Activated CD8-positive, alpha-beta T cell treated with anti-CD3 and anti-CD28 coated beads for 36 hours (primary cell): ENCODE measurements at regions of chr10 and their contacts with region 1.

Region 1: DNA sequence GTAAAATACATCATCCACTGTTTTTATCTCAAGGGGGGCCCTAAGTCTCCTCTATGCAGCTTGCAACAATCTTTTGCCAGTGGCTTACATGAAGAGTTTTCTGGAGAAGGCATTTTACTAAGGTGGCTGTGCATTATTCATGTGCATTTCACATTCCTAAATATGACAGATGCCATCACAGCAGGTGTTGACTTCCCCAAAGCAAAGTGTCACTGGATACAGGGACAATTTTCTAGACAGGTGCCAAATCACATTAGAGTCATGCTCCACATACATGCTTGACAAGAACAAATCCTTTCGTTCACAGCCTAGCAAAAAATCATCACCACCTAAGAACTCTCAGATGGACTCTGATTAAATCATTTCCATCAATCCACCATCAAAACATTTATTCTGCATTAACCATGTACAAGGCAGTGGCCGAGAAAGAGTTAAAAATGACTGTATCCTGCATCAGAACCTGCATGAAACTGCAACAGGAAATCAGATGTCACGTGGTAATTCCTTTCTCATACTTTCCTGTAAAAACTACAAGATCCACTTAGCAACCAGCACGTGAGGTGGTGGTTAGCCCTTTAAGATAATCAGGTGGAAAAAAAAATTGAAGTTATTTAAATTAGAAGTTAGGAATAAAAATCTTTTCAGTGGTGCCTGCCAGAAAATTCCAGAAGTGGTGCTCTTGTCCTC is 88.2 kb upstream of the AFAP1L2 start:
- DNase-seq: peak; percentile 82
- ATAC-seq: peak; percentile 59
- H3K4me3 Mint-ChIP-seq: peak overlapping the region; percentile 52
- H3K27ac Mint-ChIP-seq: peak overlapping the region; percentile 85
- H3K4me1 Mint-ChIP-seq: peaks cover 85% of the 10 kb centered on the region
- H3K27me3 Mint-ChIP-seq: no peaks in the 10 kb centered on the region
- CTCF ChIP-seq: no peak

Region 2: GRCh38 chr10:114541081-114541796 is 48.7 kb after region 1 on chr10:
- CTCF ChIA-PET with region 1: interaction called, 17 read pairs
- POLR2A ChIA-PET with region 1: interaction called, 19 read pairs
- intact Hi-C with region 1: loop called (anchors 5 kb)
- DNase-seq: peak; percentile 89
- ATAC-seq: peak; percentile 83
- H3K4me3 Mint-ChIP-seq: peak overlapping the region; percentile 70
- H3K27ac Mint-ChIP-seq: peak overlapping the region; percentile 100
- H3K4me1 Mint-ChIP-seq: peaks cover 87% of the 10 kb centered on the region
- H3K27me3 Mint-ChIP-seq: no peaks in the 10 kb centered on the region
- CTCF ChIP-seq: no peak

Region 3: DNA sequence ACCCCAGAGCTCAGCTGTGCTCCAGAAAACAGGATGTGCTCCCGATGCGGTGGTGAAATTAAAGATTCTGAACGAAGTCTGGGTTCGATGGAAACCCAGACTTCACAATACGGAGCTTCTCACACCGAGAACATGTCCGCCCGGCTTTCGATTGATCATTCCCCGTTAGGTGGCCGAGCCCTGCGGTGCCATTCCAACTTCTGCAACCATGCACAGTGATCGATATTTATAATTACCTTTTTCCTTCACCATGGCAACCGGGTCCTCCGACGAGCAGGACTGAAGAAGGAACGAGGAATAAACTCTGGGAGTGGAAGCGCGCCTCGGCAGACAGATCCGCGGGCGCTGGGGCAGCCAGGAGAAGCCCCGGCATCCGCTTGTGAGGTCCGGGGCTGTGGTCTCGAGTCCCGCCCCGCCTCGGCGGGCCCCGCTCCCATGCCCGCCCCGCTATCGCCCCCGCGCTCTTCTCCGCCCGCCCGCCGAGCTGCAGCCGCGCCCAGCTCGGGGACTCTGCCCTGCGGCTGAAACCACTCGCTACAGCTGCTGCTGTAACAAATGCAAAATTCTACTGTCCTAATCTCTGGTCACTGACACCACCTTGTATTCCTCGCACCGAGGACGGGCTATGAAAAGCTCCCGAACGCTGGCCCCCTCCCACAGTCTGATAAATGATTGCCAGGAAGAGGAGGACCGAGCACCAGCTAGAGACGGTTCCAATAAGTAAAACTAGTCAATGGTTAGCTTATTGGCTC is 139.3 kb after region 1 on chr10:
- CTCF ChIA-PET with region 1: no interaction called
- POLR2A ChIA-PET with region 1: no interaction called
- intact Hi-C with region 1: no loop called
- DNase-seq: peak; percentile 47
- ATAC-seq: peak; percentile 85
- H3K4me3 Mint-ChIP-seq: peak overlapping the region; percentile 74
- H3K27ac Mint-ChIP-seq: no peak overlapping the region
- H3K4me1 Mint-ChIP-seq: peaks cover 19% of the 10 kb centered on the region
- H3K27me3 Mint-ChIP-seq: peaks cover 37% of the 10 kb centered on the region
- CTCF ChIP-seq: no peak